WTC11 (cell line): ENCODE measurements at regions of chr1 and their contacts with region 1.

Region 1: GRCh38 chr1:55375617-55376258 is 160.6 kb upstream of the USP24 start:
- DNase-seq: peak; percentile 42
- ATAC-seq: peak; percentile 54
- H3K4me3 Mint-ChIP-seq: no peak overlapping the region
- H3K27ac Mint-ChIP-seq: no peak overlapping the region
- H3K4me1 Mint-ChIP-seq: no peaks in the 10 kb centered on the region
- H3K27me3 Mint-ChIP-seq: no peaks in the 10 kb centered on the region; the same call in 1 of the 2 replicates
- CTCF ChIP-seq: peak; percentile 95

Region 2: GRCh38 chr1:55337801-55338447 is 37.8 kb before region 1 on chr1:
- CTCF ChIA-PET with region 1: interaction called, 17 read pairs
- POLR2A ChIA-PET with region 1: no interaction called
- DNase-seq: peak; percentile 19
- ATAC-seq: peak; percentile 93
- H3K4me3 Mint-ChIP-seq: no peak overlapping the region
- H3K27ac Mint-ChIP-seq: no peak overlapping the region
- H3K4me1 Mint-ChIP-seq: peaks cover 4% of the 10 kb centered on the region; the same call in 1 of the 2 replicates
- H3K27me3 Mint-ChIP-seq: no peaks in the 10 kb centered on the region; the same call in 1 of the 2 replicates
- CTCF ChIP-seq: peak; percentile 29; the same call in 1 of the 2 replicates

Region 3: GRCh38 chr1:55353707-55354620 is 21.8 kb before region 1 on chr1:
- CTCF ChIA-PET with region 1: interaction called, 10 read pairs
- POLR2A ChIA-PET with region 1: no interaction called
- DNase-seq: no peak
- ATAC-seq: no peak
- H3K4me3 Mint-ChIP-seq: no peak overlapping the region
- H3K27ac Mint-ChIP-seq: no peak overlapping the region
- H3K4me1 Mint-ChIP-seq: no peaks in the 10 kb centered on the region
- H3K27me3 Mint-ChIP-seq: no peaks in the 10 kb centered on the region
- CTCF ChIP-seq: no peak

Region 4: GRCh38 chr1:55359611-55360010 is 16.1 kb before region 1 on chr1:
- CTCF ChIA-PET with region 1: interaction called, 16 read pairs
- POLR2A ChIA-PET with region 1: no interaction called
- DNase-seq: no peak
- ATAC-seq: no peak
- H3K4me3 Mint-ChIP-seq: no peak overlapping the region
- H3K27ac Mint-ChIP-seq: no peak overlapping the region
- H3K4me1 Mint-ChIP-seq: no peaks in the 10 kb centered on the region
- H3K27me3 Mint-ChIP-seq: no peaks in the 10 kb centered on the region
- CTCF ChIP-seq: no peak

Region 5: GRCh38 chr1:55396381-55396891 is 20.7 kb after region 1 on chr1:
- CTCF ChIA-PET with region 1: interaction called, 13 read pairs
- POLR2A ChIA-PET with region 1: no interaction called
- DNase-seq: no peak
- ATAC-seq: no peak
- H3K4me3 Mint-ChIP-seq: no peak overlapping the region
- H3K27ac Mint-ChIP-seq: no peak overlapping the region
- H3K4me1 Mint-ChIP-seq: no peaks in the 10 kb centered on the region
- H3K27me3 Mint-ChIP-seq: no peaks in the 10 kb centered on the region; the same call in 1 of the 2 replicates
- CTCF ChIP-seq: no peak

Region 6: GRCh38 chr1:55478742-55479141 is 103.0 kb after region 1 on chr1:
- CTCF ChIA-PET with region 1: interaction called, 21 read pairs
- POLR2A ChIA-PET with region 1: no interaction called
- DNase-seq: no peak
- ATAC-seq: no peak; the same call in 1 of the 2 replicates
- H3K4me3 Mint-ChIP-seq: no peak overlapping the region
- H3K27ac Mint-ChIP-seq: no peak overlapping the region
- H3K4me1 Mint-ChIP-seq: no peaks in the 10 kb centered on the region
- H3K27me3 Mint-ChIP-seq: no peaks in the 10 kb centered on the region; the same call in 1 of the 2 replicates
- CTCF ChIP-seq: no peak